HEK293 (cell line): ENCODE measurements at regions of chr2 and their contacts with region 1.

Region 1: GRCh38 chr2:15546297-15547098 is 14.6 kb downstream of the NBAS start:
- H3K4me3 ChIP-seq: no peak overlapping the region
- H3K27ac ChIP-seq: no peak overlapping the region
- H3K4me1 ChIP-seq: no peaks in the 10 kb centered on the region
- CTCF ChIP-seq: no peak

Region 2: GRCh38 chr2:14803994-14804393 is 742.5 kb before region 1 on chr2:
- CTCF ChIA-PET with region 1: no interaction called
- POLR2A ChIA-PET with region 1: no interaction called
- H3K4me3 ChIP-seq: no peak overlapping the region
- H3K27ac ChIP-seq: no peak overlapping the region
- H3K4me1 ChIP-seq: no peaks in the 10 kb centered on the region
- CTCF ChIP-seq: no peak

Region 3: GRCh38 chr2:15560988-15561573 is 14.6 kb after region 1 on chr2 and contains the start of gene NBAS:
- CTCF ChIA-PET with region 1: interaction called, 17 read pairs
- POLR2A ChIA-PET with region 1: no interaction called
- H3K4me3 ChIP-seq: peak within 1 kb of the TSS; percentile 99
- H3K27ac ChIP-seq: peak within 1 kb of the TSS; percentile 58
- H3K4me1 ChIP-seq: no peaks in the 10 kb centered on the region
- CTCF ChIP-seq: no peak